ENCODE measurements at regions of chr3 and their contacts with region 1.

Region 1: DNA sequence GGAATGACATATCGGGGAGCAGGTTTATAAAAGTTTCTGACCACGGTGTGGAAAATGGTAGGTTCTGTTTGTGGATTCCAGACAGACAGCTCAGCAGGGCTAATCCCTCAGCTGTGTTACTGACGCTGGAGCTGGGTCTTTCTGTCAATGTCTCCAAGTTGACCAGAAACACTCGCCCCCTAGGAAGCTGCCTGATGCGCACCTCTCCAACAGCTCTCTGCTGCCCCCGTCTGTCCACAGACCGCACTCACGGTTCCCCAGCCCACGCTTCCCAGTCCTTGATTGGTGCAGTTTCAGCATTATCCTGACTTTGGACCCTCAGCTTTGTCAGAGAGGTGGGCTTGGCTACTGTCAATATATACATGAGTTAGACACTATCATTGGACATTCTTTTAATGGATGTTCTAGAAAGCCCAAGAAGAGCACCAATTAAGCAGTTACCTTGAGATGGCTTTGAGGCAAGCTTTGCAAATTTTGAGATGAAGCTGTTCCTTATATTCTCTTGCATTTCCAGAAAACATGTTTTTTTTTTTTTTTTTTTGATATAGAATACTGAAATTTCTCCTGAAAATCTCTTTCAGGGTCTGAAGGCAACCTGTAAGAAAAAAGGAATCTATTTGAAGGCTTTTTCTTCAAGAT is 98.9 kb upstream of the TBC1D5 start:
- DNase-seq: peak; percentile 37 to 80
- ATAC-seq: peak; percentile 86

Region 2: GRCh38 chr3:17431004-17431403 is 410.3 kb before region 1 on chr3:
- intact Hi-C with region 1: loop called in 1 of 2 experiments (anchors 5 kb)
- DNase-seq: no peak
- ATAC-seq: peak; percentile 71

Region 3: DNA sequence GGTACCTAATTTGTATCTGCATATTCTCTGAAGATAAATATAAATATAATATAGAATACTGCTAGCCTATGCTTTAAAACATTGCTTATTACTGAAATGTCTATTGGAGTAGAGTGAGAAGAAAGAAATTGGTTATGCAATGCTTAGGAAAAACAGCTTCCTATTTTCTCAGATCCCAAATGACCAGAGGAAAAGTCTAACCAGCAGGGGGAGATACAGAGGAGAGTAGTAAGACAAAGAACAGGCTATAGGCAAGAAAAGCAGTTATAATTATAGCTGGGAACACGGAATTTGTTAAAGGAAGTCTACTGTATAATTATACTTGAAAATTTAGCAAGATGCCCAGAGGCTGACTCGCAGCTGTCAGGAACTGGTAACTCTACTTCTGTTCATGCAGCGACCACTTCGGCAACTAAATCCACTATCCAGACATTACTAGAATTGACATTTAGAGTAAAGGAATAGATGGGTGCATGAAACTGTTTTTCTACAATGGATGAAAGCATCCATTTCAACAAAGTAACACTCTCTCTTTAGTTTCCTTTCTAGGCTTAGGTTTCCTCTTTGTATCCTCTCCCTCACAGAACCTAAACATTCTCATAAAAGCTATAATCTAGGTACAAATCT is 196.1 kb before region 1 on chr3:
- intact Hi-C with region 1: loop called in 1 of 2 experiments (anchors 5 kb)
- DNase-seq: no peak
- ATAC-seq: peak; percentile 78